Activated T-helper 1 cell treated with anti-CD3 and anti-CD28 coated beads, Interleukin-12 subunit alpha, Interleukin-12 subunit beta, Interleukin-2, Interleukin-4 antibody, amounts not matched to agents 30 ng/mL and 10 ng/mL and 1 ng/mL, durations not matched to agents 14 hours and 24 hours and 36 hours (primary cell): ENCODE measurements at regions of chr19 and their contacts with region 1.

Region 1: GRCh38 chr19:45001087-45001739 is at the start of gene RELB:
- DNase-seq: peak; percentile 96
- H3K4me3 Mint-ChIP-seq: peak within 1 kb of the TSS; percentile 91
- H3K27ac Mint-ChIP-seq: peak within 1 kb of the TSS; percentile 97
- H3K4me1 Mint-ChIP-seq: peaks cover 11% of the 10 kb centered on the region
- H3K27me3 Mint-ChIP-seq: no peaks in the 10 kb centered on the region
- total RNA-seq, gene RELB: 73.3 and 77.5 TPM in 2 replicates

Region 2: DNA sequence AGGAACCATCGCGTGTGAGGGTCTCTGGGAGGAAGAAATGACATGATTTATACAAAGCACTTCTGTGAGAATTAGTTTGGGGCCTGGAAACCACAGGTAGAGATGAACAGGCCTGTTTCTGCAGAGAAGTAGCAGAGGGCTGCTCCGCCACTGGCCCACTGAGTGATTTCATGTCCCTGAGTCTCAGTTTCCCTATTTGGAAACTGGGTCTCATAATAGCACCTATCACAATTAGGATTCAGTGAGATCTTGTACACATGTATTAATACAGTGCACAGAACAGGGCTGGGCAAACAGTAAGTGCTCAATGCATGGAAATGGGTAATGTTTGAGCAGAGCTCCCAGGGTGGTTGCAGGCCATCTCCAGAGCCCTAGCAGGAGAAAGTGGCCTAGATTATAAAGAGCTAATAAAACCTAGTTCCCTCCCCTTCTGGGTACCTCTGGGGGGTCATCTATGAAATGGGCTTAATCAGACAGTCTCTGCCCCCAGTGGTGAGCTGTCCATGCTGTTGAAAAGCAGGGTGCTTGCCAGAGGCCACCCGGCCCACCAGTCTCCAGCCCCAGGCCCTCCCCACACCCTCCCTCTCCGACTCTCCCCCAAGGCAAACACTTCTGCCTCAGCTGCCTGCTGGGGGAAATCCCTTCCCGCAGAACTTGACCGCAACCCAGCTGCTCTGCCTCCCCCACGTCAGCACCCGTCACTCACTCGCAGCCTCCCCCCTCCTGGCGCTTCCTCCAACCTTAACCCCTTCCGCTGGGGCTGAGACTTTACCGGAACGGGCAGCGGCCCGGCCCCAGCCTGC is 248.2 kb before region 1 on chr19:
- intact Hi-C with region 1: loop called (anchors 5 kb)
- DNase-seq: peak; percentile 95
- H3K4me3 Mint-ChIP-seq: peak overlapping the region; percentile 88
- H3K27ac Mint-ChIP-seq: peak overlapping the region; percentile 90
- H3K4me1 Mint-ChIP-seq: peaks cover 60% of the 10 kb centered on the region
- H3K27me3 Mint-ChIP-seq: no peaks in the 10 kb centered on the region

Region 3: DNA sequence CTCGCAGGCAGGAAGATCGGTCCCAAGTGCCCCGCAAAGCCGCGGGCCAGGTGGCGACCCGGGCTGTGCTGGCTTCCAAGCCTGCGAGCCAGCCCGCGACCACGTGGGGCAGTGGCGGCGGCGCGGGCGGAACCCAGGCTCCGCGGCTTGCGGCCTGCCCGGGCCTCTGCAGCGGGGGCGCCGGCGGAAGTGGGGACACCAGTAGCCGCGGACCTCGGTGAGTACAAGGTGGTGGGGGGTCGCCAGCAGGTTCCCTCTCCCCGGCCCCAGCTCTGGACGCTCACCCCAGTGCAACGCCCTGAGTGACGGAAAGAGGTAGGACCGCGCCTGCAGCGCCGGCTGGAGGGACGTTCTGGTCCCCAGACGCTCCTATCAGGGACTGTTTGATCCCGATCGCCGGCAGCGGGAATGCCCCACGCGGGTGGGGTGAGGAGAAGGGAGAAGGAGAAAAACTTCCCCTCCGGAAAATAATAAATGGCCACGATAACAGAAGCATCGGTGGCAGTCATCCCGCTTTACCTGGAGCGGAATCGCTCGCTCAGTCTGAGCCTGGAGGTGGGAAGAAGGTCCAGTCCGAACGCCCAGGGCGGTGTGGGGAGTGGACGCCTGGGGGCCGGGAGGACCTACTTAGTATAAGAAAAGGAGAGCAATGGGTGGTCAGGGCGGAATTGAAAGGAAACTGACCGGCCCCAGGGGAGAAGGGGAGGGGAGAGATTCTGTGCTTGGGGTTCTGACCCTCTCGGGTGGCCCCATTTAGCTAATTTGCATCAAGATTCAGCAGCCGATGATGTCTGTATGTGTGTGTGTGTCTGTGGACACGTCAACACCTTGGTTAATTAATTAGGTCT is 78.1 kb after region 1 on chr19 and contains the start of gene GEMIN7:
- intact Hi-C with region 1: loop called (anchors 1 kb)
- DNase-seq: peak; percentile 76
- H3K4me3 Mint-ChIP-seq: peak within 1 kb of the TSS; percentile 99
- H3K27ac Mint-ChIP-seq: peak within 1 kb of the TSS; percentile 94
- H3K4me1 Mint-ChIP-seq: peaks cover 40% of the 10 kb centered on the region
- H3K27me3 Mint-ChIP-seq: no peaks in the 10 kb centered on the region
- total RNA-seq, gene GEMIN7: 46.8 and 53.6 TPM in 2 replicates